ENCODE measurements at regions of chr1 and their contacts with region 1.

Region 1: DNA sequence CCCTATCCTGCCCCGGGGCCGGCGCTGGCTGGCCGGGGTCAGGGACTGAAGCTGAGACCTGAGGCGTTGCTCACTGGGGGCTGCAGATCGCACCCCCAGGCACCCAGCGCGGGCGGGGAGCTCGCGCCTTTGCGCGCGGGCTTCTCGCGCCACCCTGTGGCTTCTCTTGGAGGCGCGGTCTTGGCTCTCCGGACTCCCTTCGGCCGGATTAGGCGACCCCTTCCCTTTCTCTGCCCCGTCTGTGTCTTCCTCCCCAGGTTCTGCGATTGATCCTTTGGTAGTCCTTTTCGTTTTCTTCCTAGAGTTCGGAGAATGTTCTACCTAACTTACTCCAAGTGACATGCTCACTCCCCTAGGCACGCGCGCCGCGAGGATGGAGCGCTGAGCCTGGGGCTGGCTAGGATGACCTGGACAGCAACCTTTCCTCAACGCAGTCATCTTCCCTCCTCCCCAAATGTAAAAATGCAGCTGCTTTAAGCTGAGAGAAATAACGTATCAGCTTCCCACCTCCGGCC is 495 bp upstream of the NTRK1 start:
- DNase-seq: no peak
- H3K4me3 ChIP-seq: peak overlapping the region; percentile 48
- CTCF ChIP-seq: peak; percentile 86

Region 2: GRCh38 chr1:156677616-156678596 is 182.3 kb before region 1 on chr1:
- CTCF ChIA-PET with region 1: interaction called, 21 read pairs
- POLR2A ChIA-PET with region 1: no interaction called
- DNase-seq: no peak
- H3K4me3 ChIP-seq: peak overlapping the region; percentile 39
- CTCF ChIP-seq: peak; percentile 92

Region 3: GRCh38 chr1:156773607-156774006 is 86.6 kb before region 1 on chr1:
- CTCF ChIA-PET with region 1: interaction called, 24 read pairs
- POLR2A ChIA-PET with region 1: interaction called, 3 read pairs
- DNase-seq: no peak
- H3K4me3 ChIP-seq: no peak overlapping the region
- CTCF ChIP-seq: no peak

Region 4: GRCh38 chr1:156797212-156797871 is 62.8 kb before region 1 on chr1:
- CTCF ChIA-PET with region 1: interaction called, 476 read pairs
- POLR2A ChIA-PET with region 1: interaction called, 3 read pairs
- DNase-seq: no peak
- H3K4me3 ChIP-seq: no peak overlapping the region
- CTCF ChIP-seq: peak; percentile 73

Region 5: DNA sequence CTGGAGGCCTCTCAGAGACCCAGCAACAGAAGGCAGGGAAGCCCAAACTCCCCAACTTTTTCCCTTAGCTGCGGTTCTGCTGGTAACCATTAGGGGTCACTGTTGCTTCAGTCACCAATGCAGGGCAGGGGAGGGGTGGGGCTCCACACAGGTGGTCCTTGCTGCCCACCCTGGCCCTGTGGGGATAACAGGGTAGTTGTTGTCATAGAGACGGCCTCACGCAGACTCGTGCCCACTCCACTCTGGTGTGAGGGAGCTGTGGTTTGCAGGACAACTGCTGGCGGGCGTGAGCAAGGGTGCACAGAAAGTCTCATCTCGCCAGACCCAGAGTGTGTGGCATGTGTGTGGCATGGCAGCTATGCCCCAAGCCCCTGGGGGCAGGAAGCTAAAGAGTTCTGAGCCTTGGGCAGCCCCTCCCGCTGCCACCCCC is 21.2 kb before region 1 on chr1:
- CTCF ChIA-PET with region 1: interaction called, 102 read pairs
- POLR2A ChIA-PET with region 1: no interaction called
- DNase-seq: no peak
- H3K4me3 ChIP-seq: no peak overlapping the region
- CTCF ChIP-seq: peak; percentile 85

Region 6: DNA sequence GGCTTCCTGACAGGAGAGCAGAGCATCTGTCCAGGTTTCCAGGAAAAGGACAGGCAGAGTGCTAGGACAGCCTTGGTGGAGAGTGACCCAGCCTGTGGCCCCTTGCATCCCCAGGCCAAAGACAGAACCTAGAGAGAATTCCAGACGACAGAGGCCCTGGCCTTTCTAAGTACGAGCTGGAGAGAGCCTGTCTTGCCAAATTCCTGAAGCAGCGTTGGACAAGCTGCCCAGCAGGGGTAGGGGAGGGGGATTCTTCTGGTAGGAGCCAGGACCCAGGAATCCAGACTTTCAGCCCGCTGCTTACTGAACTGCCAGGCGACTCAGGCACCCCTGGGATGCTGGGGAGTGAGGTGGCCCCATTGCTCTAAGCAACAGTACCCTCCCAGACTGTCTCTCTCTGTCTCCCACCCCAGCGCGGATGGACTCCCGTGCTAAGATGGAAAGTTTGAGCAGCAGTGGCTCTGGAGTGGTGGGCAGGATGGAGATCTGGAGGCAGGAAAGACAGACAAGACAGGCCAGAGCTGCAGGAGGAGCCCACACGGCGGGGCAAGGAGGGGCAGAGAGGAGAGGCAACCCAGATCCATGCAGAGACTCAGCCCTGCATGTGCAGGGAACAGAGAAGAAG is 24.5 kb after region 1 on chr1:
- CTCF ChIA-PET with region 1: interaction called, 175 read pairs
- POLR2A ChIA-PET with region 1: no interaction called
- DNase-seq: no peak
- H3K4me3 ChIP-seq: no peak overlapping the region
- CTCF ChIP-seq: no peak

Region 7: GRCh38 chr1:156927215-156928042 is 67.3 kb after region 1 on chr1:
- CTCF ChIA-PET with region 1: interaction called, 51 read pairs
- POLR2A ChIA-PET with region 1: no interaction called
- DNase-seq: no peak
- H3K4me3 ChIP-seq: peak overlapping the region; percentile 55
- CTCF ChIP-seq: peak; percentile 94

Region 8: GRCh38 chr1:157050836-157051235 is 190.7 kb after region 1 on chr1:
- CTCF ChIA-PET with region 1: no interaction called
- POLR2A ChIA-PET with region 1: no interaction called
- DNase-seq: no peak
- H3K4me3 ChIP-seq: no peak overlapping the region
- CTCF ChIP-seq: no peak